IMR-90 (cell line): ENCODE measurements at regions of chr1 and their contacts with region 1.

Region 1: GRCh38 chr1:77533660-77534305 is 148.7 kb downstream of the ZZZ3 start:
- DNase-seq: peak; percentile 75
- ATAC-seq: peak; percentile 50; the same call in 1 of the 2 replicates
- H3K4me3 ChIP-seq: no peak overlapping the region
- H3K27ac ChIP-seq: peak overlapping the region; percentile 21; the same call in 1 of the 2 replicates
- H3K4me1 ChIP-seq: peaks cover 15% of the 10 kb centered on the region
- H3K27me3 ChIP-seq: no peaks in the 10 kb centered on the region
- CTCF ChIP-seq: peak; percentile 80
- POLR2A ChIP-seq: no peak
- RAD21 ChIP-seq: peak; percentile 79

Region 2: GRCh38 chr1:77143529-77144121 is 390.2 kb before region 1 on chr1:
- CTCF ChIA-PET with region 1: no interaction called
- POLR2A ChIA-PET with region 1: interaction called, 23 read pairs
- dilution Hi-C with region 1: no loop called
- in situ Hi-C with region 1: no loop called
- intact Hi-C with region 1: loop called (anchors 1 kb)
- DNase-seq: peak; percentile 1
- ATAC-seq: no peak
- H3K4me3 ChIP-seq: no peak overlapping the region
- H3K27ac ChIP-seq: no peak overlapping the region
- H3K4me1 ChIP-seq: no peaks in the 10 kb centered on the region
- H3K27me3 ChIP-seq: no peaks in the 10 kb centered on the region
- CTCF ChIP-seq: peak; percentile 45
- POLR2A ChIP-seq: no peak
- RAD21 ChIP-seq: peak; percentile 43

Region 3: DNA sequence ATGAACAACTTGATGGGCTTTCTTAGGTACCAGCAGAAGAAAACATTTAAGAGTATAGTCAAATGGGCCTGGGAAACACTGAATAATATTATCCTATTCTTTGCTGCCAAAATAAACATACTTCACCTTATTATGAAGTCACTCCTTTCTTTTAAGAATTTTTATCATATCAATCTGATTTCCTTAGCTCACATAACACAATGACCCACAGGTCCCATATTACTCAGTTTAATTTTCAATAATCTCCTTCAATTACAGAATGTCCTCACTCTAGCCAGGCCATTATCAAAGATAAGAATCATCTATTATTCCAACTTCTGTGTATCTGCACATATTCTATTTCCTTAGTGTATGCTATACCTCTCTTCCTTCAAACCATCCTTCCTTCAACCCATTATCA is 377.6 kb before region 1 on chr1:
- CTCF ChIA-PET with region 1: no interaction called
- POLR2A ChIA-PET with region 1: no interaction called
- dilution Hi-C with region 1: no loop called
- in situ Hi-C with region 1: loop called (anchors 5 kb)
- intact Hi-C with region 1: no loop called
- DNase-seq: no peak
- ATAC-seq: no peak
- H3K4me3 ChIP-seq: no peak overlapping the region
- H3K27ac ChIP-seq: no peak overlapping the region
- H3K4me1 ChIP-seq: no peaks in the 10 kb centered on the region
- H3K27me3 ChIP-seq: no peaks in the 10 kb centered on the region
- CTCF ChIP-seq: no peak
- POLR2A ChIP-seq: no peak
- RAD21 ChIP-seq: no peak

Region 4: GRCh38 chr1:77219166-77219887 is 314.5 kb before region 1 on chr1 and contains the start of gene PIGK:
- CTCF ChIA-PET with region 1: no interaction called
- POLR2A ChIA-PET with region 1: no interaction called
- dilution Hi-C with region 1: no loop called
- in situ Hi-C with region 1: no loop called
- intact Hi-C with region 1: loop called (anchors 5 kb)
- DNase-seq: peak; percentile 79
- ATAC-seq: peak; percentile 98
- H3K4me3 ChIP-seq: peak within 1 kb of the TSS; percentile 84
- H3K27ac ChIP-seq: peak within 1 kb of the TSS; percentile 47
- H3K4me1 ChIP-seq: no peaks in the 10 kb centered on the region
- H3K27me3 ChIP-seq: no peaks in the 10 kb centered on the region
- CTCF ChIP-seq: no peak
- POLR2A ChIP-seq: no peak
- RAD21 ChIP-seq: 0 out of 2 replicates have a peak, but pooled peaks have one; percentile 2
- total RNA-seq, gene PIGK: 15.6 and 39.2 TPM in 2 replicates

Region 5: DNA sequence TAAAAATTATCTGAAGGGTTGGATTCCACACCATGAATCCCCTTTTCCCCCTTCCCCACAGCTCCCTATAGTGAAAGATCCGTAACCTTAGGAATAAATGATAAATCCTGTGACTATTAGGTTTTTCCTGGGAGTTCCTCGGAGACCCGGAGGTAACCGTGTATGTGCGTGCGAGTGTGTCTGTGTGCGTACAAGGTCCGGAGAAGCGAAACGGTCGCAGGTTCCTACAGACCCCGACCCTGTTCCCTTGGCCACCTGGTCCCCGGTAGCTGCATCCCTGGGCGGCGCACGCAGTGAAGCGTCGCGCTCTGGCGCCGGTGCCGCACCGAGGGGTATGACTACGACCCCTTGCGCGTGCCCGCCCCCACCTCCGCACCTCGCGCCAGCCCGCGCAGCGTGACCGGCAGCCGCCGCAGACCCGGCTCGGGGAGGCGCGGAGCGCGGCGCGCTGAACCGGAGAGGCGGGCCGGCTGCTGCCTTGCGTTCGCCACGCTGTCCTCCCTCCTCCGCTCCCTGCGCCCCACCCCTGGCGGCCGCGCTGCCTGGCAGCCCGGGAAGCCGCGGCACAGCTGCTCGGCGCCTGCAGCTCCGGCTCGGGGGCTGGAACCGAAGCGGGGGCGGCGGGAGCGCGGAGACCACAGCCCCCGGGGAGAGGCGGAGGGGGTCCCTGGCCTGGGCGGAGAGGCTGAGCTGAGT is 252.1 kb before region 1 on chr1 and contains the start of gene AK5:
- CTCF ChIA-PET with region 1: no interaction called
- POLR2A ChIA-PET with region 1: interaction called, 9 read pairs
- dilution Hi-C with region 1: no loop called
- in situ Hi-C with region 1: no loop called
- intact Hi-C with region 1: loop called (anchors 1 kb)
- DNase-seq: peak; percentile 48
- ATAC-seq: peak; percentile 92
- H3K4me3 ChIP-seq: peak within 1 kb of the TSS; percentile 91
- H3K27ac ChIP-seq: peak within 1 kb of the TSS; percentile 56
- H3K4me1 ChIP-seq: 0 out of 2 replicates have a peak, but pooled peaks cover 2% of the 10 kb centered on the region
- H3K27me3 ChIP-seq: no peaks in the 10 kb centered on the region
- CTCF ChIP-seq: no peak
- POLR2A ChIP-seq: no peak
- RAD21 ChIP-seq: no peak
- total RNA-seq, gene AK5: 25.8 and 54.7 TPM in 2 replicates

Region 6: GRCh38 chr1:77370583-77371306 is 163.0 kb before region 1 on chr1:
- CTCF ChIA-PET with region 1: interaction called, 3 read pairs
- POLR2A ChIA-PET with region 1: interaction called, 3 read pairs
- dilution Hi-C with region 1: no loop called
- in situ Hi-C with region 1: no loop called
- intact Hi-C with region 1: loop called (anchors 2 kb)
- DNase-seq: peak; percentile 99
- ATAC-seq: peak; percentile 96
- H3K4me3 ChIP-seq: no peak overlapping the region
- H3K27ac ChIP-seq: peak overlapping the region; percentile 93
- H3K4me1 ChIP-seq: peaks cover 10% of the 10 kb centered on the region
- H3K27me3 ChIP-seq: no peaks in the 10 kb centered on the region
- CTCF ChIP-seq: no peak
- POLR2A ChIP-seq: no peak
- RAD21 ChIP-seq: peak; percentile 4; the same call in 1 of the 2 replicates

Region 7: DNA sequence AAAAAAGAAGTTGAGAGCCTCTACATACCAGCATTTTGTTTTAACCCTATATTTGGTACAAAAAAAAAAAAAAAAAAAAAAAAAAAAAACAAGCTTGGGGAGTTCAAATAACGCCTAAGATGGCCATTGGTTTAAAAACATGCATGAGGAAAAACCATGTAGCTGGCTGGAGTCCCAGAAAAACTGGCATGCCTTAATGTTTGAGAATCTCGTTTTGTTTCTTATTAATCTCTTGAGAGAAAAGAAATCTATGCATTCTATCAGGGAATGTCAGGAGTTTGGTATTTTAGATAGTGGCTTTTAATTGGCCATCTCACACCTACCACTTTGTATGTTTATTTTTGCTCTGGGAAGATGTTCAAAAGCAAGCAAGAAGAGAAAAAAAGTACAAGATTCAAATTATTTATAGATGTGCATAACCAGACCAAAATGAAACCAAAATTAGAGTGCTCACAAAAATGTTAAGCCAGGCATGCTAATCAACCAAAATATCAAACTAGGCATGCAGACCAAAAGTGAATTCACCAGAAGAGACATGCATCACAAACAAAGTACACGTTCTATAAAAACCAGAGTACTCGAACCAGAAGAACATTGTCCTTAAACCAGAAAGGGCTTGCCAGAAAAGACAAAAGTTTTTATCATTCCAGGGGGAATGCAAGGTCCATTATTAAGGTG is 95.4 kb before region 1 on chr1:
- CTCF ChIA-PET with region 1: interaction called, 14 read pairs
- POLR2A ChIA-PET with region 1: no interaction called
- dilution Hi-C with region 1: no loop called
- in situ Hi-C with region 1: no loop called
- intact Hi-C with region 1: no loop called
- DNase-seq: peak; percentile 79
- ATAC-seq: peak; percentile 76
- H3K4me3 ChIP-seq: peak overlapping the region; percentile 37; the same call in 1 of the 2 replicates
- H3K27ac ChIP-seq: peak overlapping the region; percentile 80; the same call in 1 of the 2 replicates
- H3K4me1 ChIP-seq: peaks cover 7% of the 10 kb centered on the region
- H3K27me3 ChIP-seq: no peaks in the 10 kb centered on the region
- CTCF ChIP-seq: no peak
- POLR2A ChIP-seq: no peak
- RAD21 ChIP-seq: no peak

Region 8: DNA sequence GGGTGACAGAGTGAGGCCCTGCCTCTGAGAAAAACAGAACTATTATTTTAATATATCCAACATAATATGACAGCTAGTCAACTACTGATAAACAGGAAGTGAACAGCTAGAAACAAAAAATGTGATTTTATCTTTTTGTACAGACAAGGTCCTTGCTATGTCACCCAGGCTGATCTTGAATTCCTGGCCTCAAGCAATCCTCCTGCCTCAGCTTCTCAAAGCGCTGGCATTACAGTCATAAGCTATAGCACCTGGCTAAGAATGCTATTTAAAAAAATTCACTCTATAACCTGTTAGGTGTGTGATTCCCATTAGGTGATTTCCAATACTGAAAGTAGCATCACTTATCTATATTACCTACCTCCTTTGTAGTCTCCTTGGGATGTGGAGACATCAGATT is 495.2 kb after region 1 on chr1:
- CTCF ChIA-PET with region 1: no interaction called
- POLR2A ChIA-PET with region 1: no interaction called
- dilution Hi-C with region 1: no loop called
- in situ Hi-C with region 1: no loop called
- intact Hi-C with region 1: no loop called
- DNase-seq: no peak
- ATAC-seq: no peak
- H3K4me3 ChIP-seq: no peak overlapping the region
- H3K27ac ChIP-seq: no peak overlapping the region
- H3K4me1 ChIP-seq: no peaks in the 10 kb centered on the region
- H3K27me3 ChIP-seq: no peaks in the 10 kb centered on the region
- CTCF ChIP-seq: no peak
- POLR2A ChIP-seq: no peak
- RAD21 ChIP-seq: no peak